Ascending aorta (tissue), 2 donors: ENCODE measurements at regions of chr5 and their contacts with region 1.

Region 1: GRCh38 chr5:140664359-140665119 is at the start of gene WDR55:
- DNase-seq: peak; percentile 90 to 98
- H3K4me3 ChIP-seq: peak within 1 kb of the TSS; percentile 59 to 81
- H3K27ac ChIP-seq: peak within 1 kb of the TSS; percentile 88 to 89
- H3K4me1 ChIP-seq: peaks cover 5 to 8% of the 10 kb centered on the region in 2 donors
- H3K27me3 ChIP-seq: no peaks in the 10 kb centered on the region
- CTCF ChIP-seq: no peak
- total RNA-seq, gene WDR55: 10.1 TPM

Region 2: DNA sequence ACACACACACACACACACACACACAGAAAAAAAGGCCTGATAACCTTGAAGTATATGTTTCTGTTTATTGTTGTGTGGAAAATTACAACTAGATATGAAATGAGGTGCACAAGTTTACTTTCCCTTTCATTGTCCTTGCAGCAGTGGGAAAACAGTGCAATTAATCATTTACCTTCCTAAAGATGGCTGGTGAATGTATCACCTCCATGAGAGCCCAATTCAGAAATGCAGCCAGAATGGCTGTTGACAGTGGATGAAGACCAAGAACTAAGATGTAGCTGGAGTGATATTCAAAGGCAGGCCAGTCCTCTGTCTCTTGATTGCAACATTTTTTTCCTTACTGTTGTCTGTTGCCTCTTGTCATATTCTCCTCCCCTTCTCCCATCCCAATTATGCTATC is 166.6 kb before region 1 on chr5:
- intact Hi-C with region 1: no loop called
- DNase-seq: no peak
- H3K4me3 ChIP-seq: no peak overlapping the region
- H3K27ac ChIP-seq: no peak overlapping the region
- H3K4me1 ChIP-seq: no peaks in the 10 kb centered on the region
- H3K27me3 ChIP-seq: no peaks in the 10 kb centered on the region
- CTCF ChIP-seq: no peak

Region 3: DNA sequence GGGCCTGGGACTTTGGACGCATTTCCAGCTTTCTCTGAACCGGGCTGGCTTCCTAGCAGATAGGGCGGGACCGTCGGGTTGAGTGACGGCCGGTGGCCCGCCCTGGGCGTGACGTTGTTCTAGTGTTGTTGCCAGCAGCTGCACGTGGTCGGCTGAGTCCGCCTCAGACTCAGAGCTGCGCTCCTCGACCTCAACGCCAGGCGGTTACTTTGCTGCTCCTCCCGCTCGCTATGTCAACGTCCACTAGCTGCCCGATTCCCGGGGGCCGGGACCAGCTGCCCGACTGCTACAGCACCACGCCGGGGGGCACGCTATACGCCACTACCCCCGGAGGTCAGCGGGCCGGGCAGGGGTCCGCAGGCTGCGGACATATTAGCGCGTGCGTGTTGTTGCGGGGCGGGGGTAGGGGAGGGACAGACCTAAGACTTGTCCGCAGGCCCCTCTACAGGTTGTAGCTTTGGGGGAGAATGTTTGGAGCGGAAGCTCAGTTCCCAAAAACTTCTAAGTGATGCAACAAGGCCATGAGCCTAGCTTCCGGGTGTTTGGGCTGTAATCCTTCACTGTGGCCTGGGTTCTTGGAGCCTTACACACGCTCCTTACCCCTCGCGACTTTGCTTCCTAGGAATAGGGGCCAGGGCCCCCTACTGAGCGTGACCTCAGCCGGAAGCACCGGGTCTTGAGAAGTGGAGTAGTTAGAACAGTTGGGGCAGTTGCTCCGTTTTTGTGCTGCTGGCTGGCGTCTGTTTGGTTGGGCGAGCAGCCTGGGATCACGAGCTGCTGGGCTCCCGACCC is 116.8 kb before region 1 on chr5 and contains the start of gene EIF4EBP3:
- intact Hi-C with region 1: loop called (anchors 2 kb)
- DNase-seq: peak; percentile 87 to 98
- H3K4me3 ChIP-seq: peak within 1 kb of the TSS; percentile 63 to 69
- H3K27ac ChIP-seq: peak within 1 kb of the TSS; percentile 95 to 97
- H3K4me1 ChIP-seq: peaks cover 19 to 22% of the 10 kb centered on the region in 2 donors
- H3K27me3 ChIP-seq: no peaks in the 10 kb centered on the region
- CTCF ChIP-seq: peak; percentile 64 to 94 (median 72)
- total RNA-seq, gene EIF4EBP3: 4.0 TPM

Region 4: DNA sequence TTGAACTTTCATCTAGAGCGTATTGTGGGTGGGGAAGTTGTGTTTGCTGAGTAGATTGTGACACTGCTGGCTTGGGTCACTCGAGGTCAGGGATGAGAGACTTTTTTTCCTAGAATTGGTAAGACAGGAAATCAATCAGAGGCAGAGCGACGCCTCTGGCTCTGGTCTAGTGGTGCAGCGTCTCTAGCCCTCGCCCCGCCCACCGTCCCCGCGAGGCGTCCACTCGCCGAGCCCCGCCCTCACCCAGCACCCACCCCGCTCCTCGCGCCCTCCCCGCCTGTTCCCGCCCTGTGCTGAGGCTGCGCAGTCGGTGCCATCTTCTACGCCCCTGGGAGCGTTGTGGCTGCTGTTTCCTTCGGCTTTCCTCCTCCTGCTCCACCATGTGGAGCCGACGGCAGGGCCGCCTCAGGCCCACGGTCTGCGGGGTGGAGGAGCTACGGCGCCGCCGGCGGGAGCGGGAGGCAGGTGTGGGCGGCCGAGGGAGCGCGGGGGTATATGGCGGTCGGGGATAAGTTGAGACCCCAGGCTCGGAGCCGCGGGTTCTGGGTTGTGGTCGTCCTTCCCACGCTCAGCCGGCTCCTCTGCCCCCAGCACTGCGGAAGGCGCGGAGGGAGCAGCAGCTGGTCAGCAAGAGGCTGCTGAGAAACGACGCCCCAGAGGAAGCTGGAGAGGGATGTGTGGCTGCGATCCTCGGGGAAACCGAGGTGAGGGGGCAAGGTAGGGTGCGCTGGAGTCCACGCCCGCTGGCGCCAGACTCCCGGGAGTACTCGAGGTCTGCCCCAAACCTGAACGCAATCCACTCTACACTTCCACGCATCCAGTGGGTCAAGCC is 25.2 kb before region 1 on chr5 and contains the start of gene TMCO6:
- intact Hi-C with region 1: loop called (anchors 2 kb)
- DNase-seq: peak; percentile 83 to 98
- H3K4me3 ChIP-seq: peak within 1 kb of the TSS; percentile 61 to 86
- H3K27ac ChIP-seq: peak within 1 kb of the TSS; percentile 85 to 89
- H3K4me1 ChIP-seq: peaks cover 3 to 8% of the 10 kb centered on the region in 2 donors
- H3K27me3 ChIP-seq: no peaks in the 10 kb centered on the region
- CTCF ChIP-seq: peak; percentile 25 to 76 (median 70)
- total RNA-seq, gene TMCO6: 87.7 TPM

Region 5: GRCh38 chr5:140647042-140647341 is 17.5 kb before region 1 on chr5:
- intact Hi-C with region 1: loop called (anchors 1 kb)
- DNase-seq: peak in 1 of 2 donors; percentile 61
- H3K4me3 ChIP-seq: peak overlapping the region; percentile 88 to 90
- H3K27ac ChIP-seq: peak overlapping the region; percentile 79 to 83
- H3K4me1 ChIP-seq: peaks cover 12 to 14% of the 10 kb centered on the region in 2 donors
- H3K27me3 ChIP-seq: no peaks in the 10 kb centered on the region
- CTCF ChIP-seq: no peak

Region 6: DNA sequence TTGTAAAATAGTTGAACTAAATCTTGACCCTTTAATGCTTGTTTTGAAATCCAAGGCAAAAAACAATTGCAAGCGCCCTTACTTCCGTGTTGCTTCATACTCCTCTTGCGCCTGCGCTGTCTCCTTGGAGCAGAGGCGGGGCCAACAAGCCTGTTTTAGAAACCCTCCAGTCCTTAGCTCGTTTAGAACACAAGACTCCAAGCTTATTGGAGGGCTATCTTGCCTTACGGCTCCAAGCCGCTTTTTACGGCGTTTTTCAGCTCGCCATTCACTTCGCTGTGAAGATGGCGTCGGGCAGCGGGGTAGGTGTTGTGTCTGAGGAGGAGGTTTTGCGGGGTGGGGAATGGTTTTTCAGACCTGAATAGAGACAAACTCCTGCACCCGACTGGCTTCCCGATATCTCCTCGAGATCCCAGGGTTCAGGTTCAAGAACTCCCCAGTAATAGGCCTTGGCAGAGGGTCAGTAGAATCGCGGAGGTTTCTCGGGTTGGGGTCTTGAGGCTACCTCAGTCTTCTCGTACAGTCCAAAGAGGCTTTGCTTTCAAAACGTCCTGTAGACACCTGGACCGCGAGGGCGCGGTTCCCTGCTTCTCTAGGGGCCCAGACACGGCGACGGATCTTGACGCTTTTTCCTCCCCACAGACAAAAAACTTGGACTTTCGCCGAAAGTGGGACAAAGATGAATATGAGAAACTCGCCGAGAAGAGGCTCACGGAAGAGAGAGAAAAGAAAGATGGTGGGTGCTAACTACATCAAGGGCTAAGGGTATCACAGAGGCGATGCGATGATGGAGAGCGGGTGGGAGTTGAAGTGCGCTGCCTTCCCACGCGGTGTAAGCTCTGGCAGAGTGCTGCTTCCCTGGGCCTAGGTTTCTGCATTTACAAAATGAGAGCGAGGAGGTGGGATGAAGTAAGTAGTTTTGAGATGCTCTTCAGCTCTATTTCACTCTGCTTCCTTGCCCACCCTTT is 35.9 kb after region 1 on chr5 and contains the start of gene ZMAT2:
- intact Hi-C with region 1: loop called (anchors 5 kb)
- DNase-seq: peak; percentile 90 to 97
- H3K4me3 ChIP-seq: peak within 1 kb of the TSS; percentile 75 to 79
- H3K27ac ChIP-seq: peak within 1 kb of the TSS; percentile 71 to 76
- H3K4me1 ChIP-seq: peaks cover 3 to 14% of the 10 kb centered on the region in 2 donors
- H3K27me3 ChIP-seq: no peaks in the 10 kb centered on the region
- CTCF ChIP-seq: no peak
- total RNA-seq, gene ZMAT2: 15.5 TPM